HEK293 (cell line): ENCODE measurements at regions of chr3 and their contacts with region 1.

Region 1: DNA sequence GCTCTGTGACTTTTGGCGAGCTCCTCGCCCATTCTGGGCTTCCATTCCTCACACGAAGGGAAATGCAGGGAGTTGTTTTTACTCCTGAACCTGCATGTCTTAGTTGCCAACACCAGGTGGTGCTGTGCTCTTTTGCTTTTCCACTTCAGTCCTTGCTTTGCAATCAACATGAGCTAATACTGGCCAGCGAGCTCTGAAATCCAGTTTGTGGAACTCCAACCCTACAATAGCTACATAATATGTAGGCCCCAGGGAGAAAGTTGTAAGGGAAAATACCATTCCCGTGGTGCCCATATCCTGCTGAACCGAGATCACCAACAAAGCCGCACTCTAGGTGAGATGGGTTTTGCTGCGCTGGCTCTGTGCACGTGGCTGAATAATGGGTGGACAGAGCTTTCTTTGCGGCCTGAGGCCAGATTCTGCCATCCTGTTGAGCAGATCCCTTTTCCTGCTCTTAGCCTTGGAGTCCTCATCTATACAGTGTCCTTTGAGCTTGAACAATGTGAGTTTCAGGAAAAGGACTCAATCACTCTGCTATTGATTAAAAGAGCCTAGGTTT is 25.0 kb downstream of the LSM3 start:
- H3K4me3 ChIP-seq: no peak overlapping the region
- H3K27ac ChIP-seq: no peak overlapping the region
- H3K4me1 ChIP-seq: no peaks in the 10 kb centered on the region
- CTCF ChIP-seq: peak; percentile 70

Region 2: DNA sequence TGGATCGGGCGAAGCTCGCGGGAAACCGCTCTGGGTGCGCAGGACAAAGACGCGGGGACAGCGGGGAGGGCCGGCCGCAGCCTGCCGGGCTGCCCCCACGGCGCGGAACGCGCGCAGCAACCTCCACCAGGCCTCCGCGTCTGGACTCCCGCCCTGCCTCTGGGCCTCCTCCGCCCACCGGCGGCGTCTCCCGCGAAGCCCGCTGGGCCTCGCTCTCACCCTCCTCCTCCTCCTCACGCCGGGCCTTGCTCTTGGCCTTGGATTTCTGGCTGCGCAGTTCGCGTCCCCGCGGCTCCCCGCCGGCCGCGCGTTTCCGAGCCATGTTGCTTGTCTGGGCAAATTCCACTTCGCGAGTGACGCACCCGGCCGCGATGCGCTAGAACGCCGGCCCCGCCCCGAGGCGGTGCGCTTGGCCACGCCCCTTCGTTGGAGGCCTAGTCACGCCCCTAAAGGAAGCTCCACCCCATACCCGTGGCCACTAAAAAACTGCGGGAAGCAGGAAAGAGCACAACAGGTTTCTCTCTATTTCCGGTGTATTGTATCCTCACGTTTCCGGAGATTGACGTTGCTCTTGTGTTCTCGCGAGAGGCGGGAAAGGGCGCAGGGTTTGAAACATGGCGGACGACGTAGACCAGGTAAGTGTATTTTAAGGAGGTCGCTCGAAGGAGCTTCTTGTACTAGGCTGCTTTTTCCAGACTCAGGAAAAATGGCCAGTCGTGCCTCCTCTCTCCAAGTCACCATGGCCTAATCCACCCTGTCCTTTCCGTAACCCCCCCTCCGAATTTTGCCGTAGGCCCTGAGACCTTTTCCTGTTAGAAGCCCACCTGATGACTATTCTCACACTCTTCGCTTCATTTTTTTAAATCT is 25.1 kb before region 1 on chr3 and contains the starts of genes LSM3 and XPC:
- CTCF ChIA-PET with region 1: interaction called, 11 read pairs
- POLR2A ChIA-PET with region 1: interaction called, 10 read pairs
- H3K4me3 ChIP-seq: peak within 1 kb of the TSS; percentile 87
- H3K27ac ChIP-seq: peak within 1 kb of the TSS; percentile 79
- H3K4me1 ChIP-seq: peaks cover 7% of the 10 kb centered on the region; the same call in 1 of the 2 replicates
- CTCF ChIP-seq: no peak

Region 3: DNA sequence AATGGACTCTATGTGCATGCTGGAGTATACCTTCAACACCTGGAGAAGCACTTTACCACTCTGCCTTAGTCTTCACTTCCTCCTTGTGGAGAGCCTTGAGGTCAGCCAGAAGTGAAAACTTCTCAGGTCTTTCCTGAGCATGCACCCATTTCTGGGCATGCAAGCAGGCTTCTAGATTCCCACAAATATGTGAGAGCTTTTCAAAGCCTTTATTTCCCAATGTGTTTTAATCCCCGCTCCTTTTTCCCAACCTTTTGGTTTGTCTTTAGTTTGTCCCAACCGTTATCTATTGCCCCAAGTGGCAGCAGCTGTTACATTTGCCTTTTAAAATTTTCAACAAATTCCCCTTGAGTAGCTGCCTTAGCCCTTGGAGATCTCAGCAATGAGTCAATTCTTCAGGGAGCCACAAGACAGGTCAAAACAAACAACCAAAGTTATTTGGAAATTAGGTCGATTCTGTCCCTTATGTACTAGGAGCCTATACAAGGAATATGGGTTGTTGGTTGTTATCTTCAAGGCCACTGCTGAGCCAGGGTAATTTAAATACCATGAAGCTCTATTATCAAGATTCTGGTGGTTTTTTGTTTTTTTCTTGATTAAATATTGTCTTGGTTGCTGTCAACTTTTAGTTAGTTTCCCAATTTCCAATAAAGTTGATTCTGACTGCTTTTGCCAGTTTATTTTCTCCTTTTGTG is 19.4 kb after region 1 on chr3:
- CTCF ChIA-PET with region 1: interaction called, 19 read pairs
- POLR2A ChIA-PET with region 1: no interaction called
- H3K4me3 ChIP-seq: no peak overlapping the region
- H3K27ac ChIP-seq: no peak overlapping the region
- H3K4me1 ChIP-seq: no peaks in the 10 kb centered on the region
- CTCF ChIP-seq: no peak

Region 4: DNA sequence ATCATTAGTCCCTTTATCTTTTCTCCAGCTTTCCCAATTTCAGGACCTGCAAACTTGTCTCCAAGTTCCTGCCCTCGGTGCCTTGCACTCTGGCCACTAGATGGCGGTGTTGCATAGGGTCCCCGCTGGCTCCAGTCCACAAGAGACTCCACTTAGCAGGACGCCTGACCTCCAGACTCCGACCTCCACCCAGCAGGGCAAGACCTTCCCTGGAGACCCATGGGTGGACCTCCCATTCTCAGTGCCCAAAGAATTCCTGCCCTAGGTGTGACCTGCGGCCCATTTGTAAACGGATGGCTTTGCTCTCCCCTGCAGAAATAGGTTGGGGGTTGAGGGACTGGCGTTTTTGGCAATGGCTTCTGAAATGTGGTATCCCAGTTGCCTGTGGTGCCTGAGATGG is 57.6 kb after region 1 on chr3:
- CTCF ChIA-PET with region 1: interaction called, 51 read pairs
- POLR2A ChIA-PET with region 1: no interaction called
- H3K4me3 ChIP-seq: no peak overlapping the region
- H3K27ac ChIP-seq: no peak overlapping the region
- H3K4me1 ChIP-seq: peaks cover 5% of the 10 kb centered on the region; the same call in 1 of the 2 replicates
- CTCF ChIP-seq: peak; percentile 84

Region 5: GRCh38 chr3:14467814-14468620 is 264.4 kb after region 1 on chr3:
- CTCF ChIA-PET with region 1: interaction called, 38 read pairs
- POLR2A ChIA-PET with region 1: no interaction called
- H3K4me3 ChIP-seq: no peak overlapping the region
- H3K27ac ChIP-seq: no peak overlapping the region
- H3K4me1 ChIP-seq: no peaks in the 10 kb centered on the region
- CTCF ChIP-seq: peak; percentile 75

Region 6: GRCh38 chr3:14548321-14548729 is 344.7 kb after region 1 on chr3:
- CTCF ChIA-PET with region 1: interaction called, 27 read pairs
- POLR2A ChIA-PET with region 1: no interaction called
- H3K4me3 ChIP-seq: no peak overlapping the region
- H3K27ac ChIP-seq: no peak overlapping the region
- H3K4me1 ChIP-seq: no peaks in the 10 kb centered on the region
- CTCF ChIP-seq: peak; percentile 80